Activated T-helper 2 cell treated with anti-CD3 and anti-CD28 coated beads, Interferon-gamma antibody, Interleukin-2, Interleukin-4, amounts not matched to agents 10 μg/mL and 5 μg/mL and 100 μg/mL, durations not matched to agents 14 hours and 24 hours and 36 hours (primary cell): ENCODE measurements at regions of chr3 and their contacts with region 1.

Region 1: DNA sequence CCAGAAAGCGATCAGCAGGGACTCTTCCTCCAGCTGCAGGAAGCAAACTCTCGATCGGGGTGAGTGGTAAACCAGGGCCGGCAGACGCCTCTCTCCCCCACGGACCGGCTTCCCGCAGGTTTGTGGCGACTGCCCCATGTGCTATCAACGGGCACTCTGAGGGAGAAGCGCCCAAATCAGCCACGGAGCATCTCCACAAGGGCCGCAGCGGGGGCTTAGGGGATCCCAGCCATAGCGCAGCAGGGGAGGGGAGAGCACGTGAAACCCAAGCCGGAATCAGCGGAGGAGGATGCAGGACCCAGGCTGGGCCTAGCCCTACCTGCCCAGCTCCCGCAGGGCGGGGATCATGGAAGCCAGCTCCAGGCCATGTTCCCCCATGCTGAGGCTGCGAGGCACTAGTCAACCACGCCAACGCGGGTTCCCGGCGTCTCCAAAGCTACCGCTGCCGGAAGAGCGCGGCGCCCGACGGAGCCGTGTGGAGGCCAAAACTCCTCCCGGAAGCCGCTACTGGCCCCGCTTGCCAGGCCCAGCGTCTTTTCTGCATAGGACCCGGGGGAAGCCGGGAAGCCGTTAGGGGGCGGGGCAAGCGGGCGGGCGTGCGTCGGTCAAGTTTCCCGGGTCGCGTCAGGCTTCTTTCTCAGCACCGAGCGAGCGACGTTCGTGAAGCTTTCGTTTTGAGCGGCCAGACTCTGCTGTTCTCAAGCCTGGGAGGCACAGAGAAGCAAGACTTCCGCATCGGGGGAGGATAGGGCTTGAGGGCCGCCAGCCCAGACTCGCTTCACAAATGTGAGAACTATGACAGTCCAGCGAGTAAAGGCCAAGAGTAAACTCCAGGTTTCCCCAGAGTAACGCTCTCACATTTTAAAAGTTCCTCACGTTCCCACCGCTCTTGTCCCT is at the start of gene ATR:
- DNase-seq: peak; percentile 96
- H3K4me3 Mint-ChIP-seq: peak within 1 kb of the TSS; percentile 99
- H3K27ac Mint-ChIP-seq: peak within 1 kb of the TSS; percentile 96
- H3K4me1 Mint-ChIP-seq: peaks cover 38% of the 10 kb centered on the region
- H3K27me3 Mint-ChIP-seq: peaks cover 11% of the 10 kb centered on the region
- total RNA-seq, gene ATR: 29.1 and 32.8 TPM in 2 replicates

Region 2: GRCh38 chr3:142028243-142028777 is 550.3 kb before region 1 on chr3:
- intact Hi-C with region 1: loop called (anchors 10 kb)
- DNase-seq: peak; percentile 26
- H3K4me3 Mint-ChIP-seq: peak overlapping the region; percentile 90
- H3K27ac Mint-ChIP-seq: peak overlapping the region; percentile 86
- H3K4me1 Mint-ChIP-seq: peaks cover 31% of the 10 kb centered on the region
- H3K27me3 Mint-ChIP-seq: no peaks in the 10 kb centered on the region

Region 3: DNA sequence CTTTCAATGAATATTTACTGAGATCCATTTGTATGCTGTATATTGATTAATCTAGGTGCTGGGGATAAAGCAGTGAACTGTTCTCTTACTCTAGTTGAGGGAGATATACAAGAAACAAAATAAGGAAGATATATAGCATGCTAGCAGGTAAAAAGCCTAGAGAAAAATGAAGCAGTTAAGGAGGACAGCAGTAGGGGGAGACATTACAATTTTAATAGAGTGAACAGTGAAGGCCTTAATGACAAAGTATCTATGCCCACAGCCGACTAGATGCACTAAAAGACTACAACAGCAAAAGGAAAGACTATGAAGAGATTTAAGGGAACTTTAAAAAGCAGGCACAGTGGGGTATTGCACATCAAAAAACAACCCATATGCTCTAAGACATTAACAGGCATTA is 212.1 kb before region 1 on chr3:
- intact Hi-C with region 1: loop called (anchors 10 kb)
- DNase-seq: no peak
- H3K4me3 Mint-ChIP-seq: no peak overlapping the region
- H3K27ac Mint-ChIP-seq: no peak overlapping the region
- H3K4me1 Mint-ChIP-seq: no peaks in the 10 kb centered on the region
- H3K27me3 Mint-ChIP-seq: no peaks in the 10 kb centered on the region

Region 4: DNA sequence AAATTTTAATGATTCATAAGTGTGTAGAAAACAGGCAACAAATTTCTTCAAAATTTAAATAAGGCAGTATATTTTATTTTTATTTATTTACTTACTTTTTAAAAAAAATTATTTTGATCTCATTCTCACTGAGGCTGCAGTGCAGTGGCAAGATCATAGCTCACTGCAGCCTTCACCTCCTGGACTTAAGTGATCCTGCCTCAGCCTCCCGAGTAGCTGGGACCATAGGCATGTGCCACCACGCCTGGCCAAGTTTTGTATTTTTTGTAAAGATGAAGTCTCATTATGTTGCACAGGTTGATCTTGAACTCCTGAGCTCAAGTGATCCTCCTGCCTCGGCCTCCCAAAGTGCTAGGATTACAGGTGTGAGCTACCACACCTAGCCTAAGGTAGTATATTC is 69.5 kb before region 1 on chr3:
- intact Hi-C with region 1: loop called (anchors 5 kb)
- DNase-seq: no peak
- H3K4me3 Mint-ChIP-seq: peak overlapping the region; percentile 69
- H3K27ac Mint-ChIP-seq: peak overlapping the region; percentile 86
- H3K4me1 Mint-ChIP-seq: peaks cover 20% of the 10 kb centered on the region
- H3K27me3 Mint-ChIP-seq: no peaks in the 10 kb centered on the region

Region 5: GRCh38 chr3:142542054-142542453 is 36.5 kb before region 1 on chr3:
- intact Hi-C with region 1: no loop called
- DNase-seq: no peak
- H3K4me3 Mint-ChIP-seq: no peak overlapping the region
- H3K27ac Mint-ChIP-seq: no peak overlapping the region
- H3K4me1 Mint-ChIP-seq: no peaks in the 10 kb centered on the region
- H3K27me3 Mint-ChIP-seq: no peaks in the 10 kb centered on the region

Region 6: GRCh38 chr3:142595951-142596725 is 17.6 kb after region 1 on chr3 and contains the start of gene PLS1:
- intact Hi-C with region 1: loop called (anchors 1 kb)
- DNase-seq: peak; percentile 87
- H3K4me3 Mint-ChIP-seq: peak within 1 kb of the TSS; percentile 95
- H3K27ac Mint-ChIP-seq: peak within 1 kb of the TSS; percentile 83
- H3K4me1 Mint-ChIP-seq: peaks cover 17% of the 10 kb centered on the region
- H3K27me3 Mint-ChIP-seq: no peaks in the 10 kb centered on the region
- total RNA-seq, gene PLS1: 6.2 and 6.8 TPM in 2 replicates

Region 7: DNA sequence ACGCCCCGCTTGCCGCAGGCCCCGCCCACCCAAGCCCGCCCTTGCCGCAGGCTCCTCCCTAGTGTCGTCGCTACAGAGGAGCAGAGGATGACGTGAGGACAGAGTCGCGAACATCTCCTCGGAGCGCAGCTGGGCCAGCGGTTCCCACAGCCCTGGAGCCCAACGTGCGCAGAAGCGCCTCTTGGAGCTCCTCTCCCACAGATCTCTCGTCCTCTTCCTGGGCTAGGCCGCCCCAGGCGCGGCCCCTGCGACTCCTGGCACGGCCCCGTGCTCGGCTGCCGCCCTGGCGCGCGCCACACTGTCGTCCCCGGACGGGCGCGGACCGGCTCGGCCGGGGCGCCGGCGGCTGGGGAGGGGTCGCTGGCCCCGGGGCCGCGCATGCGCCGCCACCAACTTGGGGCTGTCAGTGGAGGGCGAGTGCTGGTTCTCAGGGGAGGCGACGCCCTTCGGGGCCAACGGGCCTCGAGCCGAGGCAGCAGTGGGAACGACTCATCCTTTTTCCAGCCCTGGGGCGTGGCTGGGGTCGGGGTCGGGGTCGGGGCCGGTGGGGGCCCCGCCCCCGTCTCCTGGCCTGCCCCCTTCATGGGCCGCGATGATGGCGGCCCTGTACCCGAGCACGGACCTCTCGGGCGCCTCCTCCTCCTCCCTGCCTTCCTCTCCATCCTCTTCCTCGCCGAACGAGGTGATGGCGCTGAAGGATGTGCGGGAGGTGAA is 145.6 kb after region 1 on chr3 and contains the start of gene TRPC1:
- intact Hi-C with region 1: loop called (anchors 5 kb)
- DNase-seq: peak; percentile 76
- H3K4me3 Mint-ChIP-seq: peak within 1 kb of the TSS; percentile 86
- H3K27ac Mint-ChIP-seq: peak within 1 kb of the TSS; percentile 80
- H3K4me1 Mint-ChIP-seq: peaks cover 4% of the 10 kb centered on the region
- H3K27me3 Mint-ChIP-seq: peaks cover 56% of the 10 kb centered on the region
- total RNA-seq, gene TRPC1: 1.4 and 2.5 TPM in 2 replicates

Region 8: DNA sequence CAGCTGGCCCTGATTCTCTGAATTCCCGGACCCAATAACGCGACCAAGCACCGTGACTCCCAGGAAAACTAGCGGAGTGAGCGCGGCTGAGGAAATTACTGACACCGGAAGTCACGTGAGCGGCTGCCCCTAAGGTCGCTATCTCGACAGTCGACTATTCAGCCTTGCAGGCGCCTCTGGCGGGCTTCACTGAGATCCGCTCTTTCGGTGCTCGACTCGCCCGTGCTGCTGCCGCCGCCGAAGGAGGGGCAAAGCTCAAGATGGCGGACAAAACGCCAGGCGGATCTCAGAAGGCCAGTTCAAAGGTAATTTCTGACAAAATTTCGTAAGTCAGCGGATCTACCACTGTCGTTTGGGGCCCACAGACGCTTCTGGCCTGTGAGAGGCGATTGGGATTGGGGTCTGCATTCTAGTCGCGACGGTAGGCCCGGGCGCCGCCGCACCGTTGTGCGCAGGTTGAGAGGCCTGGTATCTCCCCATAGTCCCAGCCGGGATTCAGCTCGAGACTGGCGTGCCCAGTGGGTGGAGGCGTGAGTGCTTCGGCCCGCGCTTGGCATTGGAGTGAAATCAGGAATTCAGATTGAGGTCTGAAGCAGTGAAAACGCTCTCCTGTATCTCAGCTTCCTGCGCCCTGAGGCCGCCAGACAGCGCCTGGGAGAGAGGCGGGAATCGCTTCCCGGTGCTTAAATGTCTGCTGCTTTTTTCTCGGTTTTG is 423.0 kb after region 1 on chr3 and contains the start of gene U2SURP:
- intact Hi-C with region 1: loop called (anchors 1 kb)
- DNase-seq: peak; percentile 91
- H3K4me3 Mint-ChIP-seq: peak within 1 kb of the TSS; percentile 94
- H3K27ac Mint-ChIP-seq: peak within 1 kb of the TSS; percentile 96
- H3K4me1 Mint-ChIP-seq: peaks cover 22% of the 10 kb centered on the region
- H3K27me3 Mint-ChIP-seq: peaks cover 3% of the 10 kb centered on the region
- total RNA-seq, gene U2SURP: 176 TPM in 2 replicates

Region 9: GRCh38 chr3:143135150-143135549 is 556.6 kb after region 1 on chr3:
- intact Hi-C with region 1: no loop called
- DNase-seq: no peak
- H3K4me3 Mint-ChIP-seq: no peak overlapping the region
- H3K27ac Mint-ChIP-seq: no peak overlapping the region
- H3K4me1 Mint-ChIP-seq: peaks cover 17% of the 10 kb centered on the region
- H3K27me3 Mint-ChIP-seq: no peaks in the 10 kb centered on the region